ENCODE measurements at regions of chr20 and their contacts with region 1.

Region 1: DNA sequence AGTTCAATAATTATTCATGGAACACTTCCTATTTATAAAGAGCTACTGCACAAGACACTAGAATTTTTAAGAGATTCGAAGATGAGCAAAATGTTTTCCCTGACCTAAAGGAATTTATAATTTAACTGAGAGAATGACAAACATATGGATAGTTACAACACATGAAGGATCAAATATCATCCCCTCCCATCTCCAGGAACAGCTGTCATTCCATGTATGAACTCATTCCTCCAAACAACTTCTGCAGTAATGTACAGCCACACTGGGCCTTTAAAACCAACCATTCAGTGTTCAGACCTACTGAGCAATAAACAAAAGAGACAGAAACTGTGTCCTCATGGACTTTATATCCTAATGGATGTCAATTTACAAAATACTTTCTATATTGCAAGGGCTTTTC is 87.8 kb downstream of the KIF16B start:
- DNase-seq: no peak
- ATAC-seq: no peak
- H3K4me3 ChIP-seq: no peak overlapping the region
- H3K27ac ChIP-seq: no peak overlapping the region
- H3K4me1 ChIP-seq: no peaks in the 10 kb centered on the region
- H3K27me3 ChIP-seq: no peaks in the 10 kb centered on the region
- CTCF ChIP-seq: no peak
- POLR2A ChIP-seq: no peak

Region 2: GRCh38 chr20:14672066-14672465 is 1813.3 kb before region 1 on chr20:
- intact Hi-C with region 1: loop called in 1 of 10 experiments (anchors 10 kb)
- DNase-seq: no peak
- ATAC-seq: no peak
- H3K4me3 ChIP-seq: no peak overlapping the region
- H3K27ac ChIP-seq: no peak overlapping the region
- H3K4me1 ChIP-seq: no peaks in the 10 kb centered on the region
- H3K27me3 ChIP-seq: no peaks in the 10 kb centered on the region
- CTCF ChIP-seq: no peak
- POLR2A ChIP-seq: no peak